ENCODE measurements at regions of chr14 and their contacts with region 1.

Region 1: DNA sequence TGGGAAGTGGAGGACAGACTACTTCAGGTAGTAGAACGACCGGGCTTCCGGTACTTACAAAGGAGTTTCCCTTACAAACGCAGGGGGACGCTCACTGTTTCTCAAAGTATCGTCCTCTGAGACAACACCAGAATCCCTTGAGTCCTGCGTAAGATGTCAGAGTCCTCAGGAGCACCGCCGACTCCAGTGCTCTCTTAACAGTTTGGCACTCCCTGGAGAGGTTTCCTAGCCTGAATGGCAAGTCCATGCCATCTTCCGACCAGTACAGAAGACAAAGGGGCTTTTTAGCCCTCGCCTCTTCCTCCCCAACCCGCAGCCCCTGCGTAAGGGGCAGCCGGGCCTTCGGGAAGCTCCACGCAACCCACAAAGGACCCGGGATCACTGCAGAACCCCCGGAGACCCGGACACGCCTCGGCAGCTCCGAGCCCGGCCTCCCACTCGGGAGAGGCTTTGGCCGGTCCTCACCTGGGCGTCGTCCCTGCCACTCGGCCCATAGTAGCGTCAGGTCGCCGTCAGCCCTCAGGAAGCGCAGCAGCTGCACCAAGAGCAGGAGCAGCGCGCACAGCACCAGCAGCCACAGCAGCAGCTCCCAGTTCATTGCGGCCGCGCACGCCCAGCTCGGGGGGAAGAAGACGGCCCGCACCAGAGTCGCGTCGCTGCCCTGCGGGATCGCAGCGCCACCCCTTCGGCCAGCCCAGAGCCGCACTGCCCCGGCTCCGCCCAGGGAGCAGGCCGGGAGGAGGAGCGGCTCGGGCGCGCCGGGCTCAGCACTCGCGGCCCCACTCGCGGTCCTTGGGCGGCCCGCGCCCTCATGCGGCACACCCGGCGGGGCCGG is at the start of gene DHRS7:
- DNase-seq: peak; percentile 83 to 89 (median 83)
- H3K4me3 ChIP-seq: peak within 1 kb of the TSS; percentile 69 to 99 (median 94)
- H3K27ac ChIP-seq: peak within 1 kb of the TSS; percentile 84 to 93
- H3K4me1 ChIP-seq: peaks cover 4 to 22% (median 14%) of the 10 kb centered on the region in 4 experiments
- H3K27me3 ChIP-seq: no peaks in the 10 kb centered on the region

Region 2: GRCh38 chr14:60064491-60065072 is 100.3 kb before region 1 on chr14:
- CTCF ChIA-PET with region 1: interaction called, 11 read pairs
- POLR2A ChIA-PET with region 1: interaction called, 3 read pairs
- DNase-seq: peak; percentile 48 to 59 (median 53)
- H3K4me3 ChIP-seq: no peak overlapping the region
- H3K27ac ChIP-seq: no peak overlapping the region
- H3K4me1 ChIP-seq: no peaks in the 10 kb centered on the region
- H3K27me3 ChIP-seq: no peaks in the 10 kb centered on the region

Region 3: GRCh38 chr14:60151715-60152114 is 13.2 kb before region 1 on chr14:
- CTCF ChIA-PET with region 1: interaction called, 28 read pairs
- POLR2A ChIA-PET with region 1: no interaction called
- DNase-seq: peak; percentile 71 to 97 (median 90)
- H3K4me3 ChIP-seq: no peak overlapping the region
- H3K27ac ChIP-seq: peak overlapping the region in 1 of 2 experiments; percentile 67
- H3K4me1 ChIP-seq: peaks cover 20 to 42% (median 29%) of the 10 kb centered on the region in 4 experiments
- H3K27me3 ChIP-seq: no peaks in the 10 kb centered on the region

Measured in common myeloid progenitor, CD34-positive (primary cell).